Endothelial cell of umbilical vein (primary cell): ENCODE measurements at regions of chr11 and their contacts with region 1.

Region 1: DNA sequence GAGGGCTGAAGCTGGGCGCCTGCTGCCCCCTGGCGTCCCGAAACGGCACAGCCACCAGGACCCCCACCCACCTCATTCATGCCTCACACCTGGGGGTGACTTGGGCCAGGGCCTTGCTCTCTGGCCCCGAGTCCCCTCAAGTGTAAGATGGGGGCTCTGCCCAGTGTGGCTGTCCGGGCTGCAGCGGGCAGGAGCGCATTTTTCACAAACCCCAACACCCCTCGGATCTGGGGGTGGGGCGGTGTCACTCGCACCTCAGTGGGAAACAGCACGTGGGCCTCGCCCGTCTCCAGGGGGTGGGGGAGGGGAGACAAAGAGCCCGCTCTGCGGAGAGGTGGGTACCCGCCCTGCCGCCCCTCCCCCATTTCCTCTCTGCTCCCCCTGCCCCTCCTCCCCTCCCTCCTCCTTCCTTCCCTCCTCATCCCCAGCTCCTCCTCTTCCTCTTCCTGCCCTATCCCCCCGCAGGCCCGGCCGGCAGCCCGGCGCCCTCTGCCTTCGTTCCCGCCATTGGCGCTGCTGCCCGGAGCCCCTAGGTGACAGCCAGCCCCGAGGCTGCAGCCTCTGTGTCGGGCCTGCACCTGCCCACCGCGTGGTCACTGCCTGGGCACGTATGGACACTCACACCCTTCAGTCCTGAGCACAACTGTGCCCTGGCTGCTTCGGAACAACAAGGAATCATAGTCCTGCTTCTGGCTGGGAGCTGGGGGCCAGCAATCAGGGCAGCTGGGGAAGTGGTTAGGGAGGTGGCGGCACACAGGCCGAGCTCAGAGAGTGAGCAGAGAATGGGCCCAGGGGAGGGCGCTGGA is 6.8 kb upstream of the CDKN1C start:
- DNase-seq: peak; percentile 64
- H3K4me3 ChIP-seq: peak overlapping the region in 2 of 3 experiments; percentile 29 to 36
- H3K27ac ChIP-seq: peak overlapping the region; percentile 43
- H3K4me1 ChIP-seq: peaks cover 14% of the 10 kb centered on the region
- H3K27me3 ChIP-seq: no peaks in the 10 kb centered on the region
- CTCF ChIP-seq: peak; percentile 95 to 98
- POLR2A ChIP-seq: peak; percentile 79

Region 2: DNA sequence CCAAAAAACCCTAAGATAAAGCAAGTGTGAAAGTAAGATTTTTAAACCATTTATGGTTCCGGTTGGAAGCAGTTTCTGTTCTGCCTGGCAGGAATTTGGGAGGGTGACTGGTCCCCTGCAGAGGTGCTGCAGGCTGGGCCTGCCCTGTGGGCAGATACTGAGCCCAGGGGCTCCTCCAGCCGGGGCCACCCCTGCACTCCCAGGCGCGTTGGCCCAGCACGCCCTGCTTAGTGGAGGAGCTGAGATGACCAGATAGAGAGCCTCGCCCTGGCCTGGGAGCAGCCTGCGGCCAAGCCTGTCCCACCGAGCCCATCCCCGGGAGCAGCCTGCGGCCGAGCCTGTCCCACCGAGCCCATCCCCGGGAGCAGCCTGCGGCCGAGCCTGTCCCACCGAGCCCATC is 28.8 kb after region 1 on chr11:
- CTCF ChIA-PET with region 1: interaction called, 15 read pairs
- POLR2A ChIA-PET with region 1: no interaction called
- dilution Hi-C with region 1: no loop called
- intact Hi-C with region 1: no loop called
- DNase-seq: no peak
- H3K4me3 ChIP-seq: no peak overlapping the region
- H3K27ac ChIP-seq: no peak overlapping the region
- H3K4me1 ChIP-seq: no peaks in the 10 kb centered on the region
- H3K27me3 ChIP-seq: no peaks in the 10 kb centered on the region
- CTCF ChIP-seq: no peak
- POLR2A ChIP-seq: no peak

Region 3: GRCh38 chr11:2945031-2945756 is 52.8 kb after region 1 on chr11:
- CTCF ChIA-PET with region 1: interaction called, 18 read pairs
- POLR2A ChIA-PET with region 1: no interaction called
- dilution Hi-C with region 1: no loop called
- intact Hi-C with region 1: no loop called
- DNase-seq: peak; percentile 83
- H3K4me3 ChIP-seq: no peak overlapping the region
- H3K27ac ChIP-seq: no peak overlapping the region
- H3K4me1 ChIP-seq: peaks cover 11% of the 10 kb centered on the region
- H3K27me3 ChIP-seq: no peaks in the 10 kb centered on the region
- CTCF ChIP-seq: no peak
- POLR2A ChIP-seq: no peak